ENCODE measurements at regions of chr9 and their contacts with region 1.

Region 1: GRCh38 chr9:114953917-114954316 is 23.5 kb upstream of the TNFSF8 start:
- DNase-seq: no peak
- H3K4me3 ChIP-seq: no peak overlapping the region
- H3K4me3 Mint-ChIP-seq: no peak overlapping the region
- H3K27ac Mint-ChIP-seq: no peak overlapping the region
- H3K4me1 ChIP-seq: no peaks in the 10 kb centered on the region
- H3K4me1 Mint-ChIP-seq: no peaks in the 10 kb centered on the region
- H3K27me3 ChIP-seq: no peaks in the 10 kb centered on the region
- H3K27me3 Mint-ChIP-seq: peaks cover 11% of the 10 kb centered on the region
- CTCF ChIP-seq: no peak

Region 2: DNA sequence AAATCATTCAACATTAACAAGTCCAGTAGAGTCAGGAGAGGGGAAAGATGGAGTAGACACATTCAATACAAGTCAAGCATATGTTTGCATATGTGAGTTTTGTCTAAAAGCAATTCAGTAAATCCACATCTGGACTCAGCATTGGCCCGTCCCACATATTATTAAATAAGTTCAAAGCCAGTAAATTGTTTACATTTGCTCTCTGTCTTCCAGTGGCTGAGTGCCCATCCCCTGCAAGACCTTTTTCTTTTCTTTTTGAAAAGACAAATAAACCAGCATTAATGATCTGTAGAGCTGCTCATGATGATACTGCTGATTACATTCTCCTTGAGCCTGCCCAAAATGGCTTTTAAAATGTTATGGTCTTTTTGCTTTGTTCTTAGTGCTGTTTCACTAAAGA is 92.9 kb after region 1 on chr9:
- CTCF ChIA-PET with region 1: no interaction called
- POLR2A ChIA-PET with region 1: no interaction called
- intact Hi-C with region 1: no loop called
- DNase-seq: no peak
- H3K4me3 ChIP-seq: no peak overlapping the region
- H3K4me3 Mint-ChIP-seq: no peak overlapping the region
- H3K27ac Mint-ChIP-seq: no peak overlapping the region
- H3K4me1 ChIP-seq: no peaks in the 10 kb centered on the region
- H3K4me1 Mint-ChIP-seq: peaks cover 6% of the 10 kb centered on the region
- H3K27me3 ChIP-seq: no peaks in the 10 kb centered on the region
- H3K27me3 Mint-ChIP-seq: no peaks in the 10 kb centered on the region
- CTCF ChIP-seq: no peak

Region 3: DNA sequence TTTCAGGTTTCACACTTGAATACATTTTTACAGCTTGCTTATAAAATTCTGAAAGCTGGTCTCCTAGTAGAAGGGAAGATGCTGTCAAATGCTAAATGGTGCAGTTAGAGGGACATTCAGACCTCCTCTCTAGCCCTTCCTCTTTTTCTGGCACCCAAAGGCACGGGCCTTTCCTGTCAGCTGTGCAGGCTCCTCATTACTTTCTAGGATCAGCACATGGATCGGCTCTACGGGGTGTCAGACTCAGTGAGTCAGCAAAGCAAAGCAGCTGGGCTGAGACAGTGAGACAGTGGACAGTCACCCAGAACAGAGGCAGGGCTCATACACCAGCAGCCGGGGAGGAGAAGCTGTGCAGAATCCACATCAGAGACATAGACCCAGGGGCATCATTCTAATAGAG is 244.1 kb after region 1 on chr9:
- CTCF ChIA-PET with region 1: no interaction called
- POLR2A ChIA-PET with region 1: no interaction called
- intact Hi-C with region 1: loop called (anchors 10 kb)
- DNase-seq: no peak
- H3K4me3 ChIP-seq: no peak overlapping the region
- H3K4me3 Mint-ChIP-seq: no peak overlapping the region
- H3K27ac Mint-ChIP-seq: no peak overlapping the region
- H3K4me1 ChIP-seq: no peaks in the 10 kb centered on the region
- H3K4me1 Mint-ChIP-seq: no peaks in the 10 kb centered on the region
- H3K27me3 ChIP-seq: no peaks in the 10 kb centered on the region
- H3K27me3 Mint-ChIP-seq: no peaks in the 10 kb centered on the region
- CTCF ChIP-seq: no peak